ENCODE measurements at regions of chr19 and their contacts with region 1.

Region 1: DNA sequence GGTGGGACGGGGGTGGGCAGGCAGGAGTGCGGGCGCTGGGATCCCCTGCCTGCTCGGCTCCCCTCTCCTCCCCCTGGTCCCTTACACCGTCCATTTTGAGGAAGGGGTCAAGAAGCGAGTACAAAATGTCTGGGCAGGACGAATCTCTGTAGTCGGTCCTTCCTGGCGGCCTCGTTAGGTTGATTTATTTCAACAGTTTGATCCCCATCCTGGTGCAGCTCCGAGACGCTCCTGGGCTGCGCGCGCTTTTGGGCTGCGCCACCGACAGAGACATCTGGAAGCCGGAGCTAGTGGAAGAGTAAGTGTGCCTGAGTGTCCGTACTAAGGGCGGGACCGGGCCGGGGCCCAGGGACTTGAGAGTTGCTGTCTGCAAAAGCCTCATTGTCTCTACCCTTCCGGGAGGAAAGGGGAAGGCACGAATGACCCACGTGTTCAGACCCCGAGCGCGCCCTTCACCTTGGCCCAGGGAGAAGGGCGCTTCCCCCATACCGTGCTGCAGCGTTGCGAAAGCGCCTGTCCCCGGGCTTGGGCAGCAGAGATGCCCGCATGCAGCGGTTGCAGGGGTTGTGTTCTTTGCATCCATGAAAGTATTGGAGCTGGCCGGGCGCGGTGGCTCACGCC is 1.8 kb downstream of the ZNF114 start:
- DNase-seq: peak; percentile 31
- H3K4me3 ChIP-seq: peak overlapping the region; percentile 58
- H3K27ac ChIP-seq: no peak overlapping the region
- H3K4me1 ChIP-seq: no peaks in the 10 kb centered on the region
- CTCF ChIP-seq: no peak

Region 2: DNA sequence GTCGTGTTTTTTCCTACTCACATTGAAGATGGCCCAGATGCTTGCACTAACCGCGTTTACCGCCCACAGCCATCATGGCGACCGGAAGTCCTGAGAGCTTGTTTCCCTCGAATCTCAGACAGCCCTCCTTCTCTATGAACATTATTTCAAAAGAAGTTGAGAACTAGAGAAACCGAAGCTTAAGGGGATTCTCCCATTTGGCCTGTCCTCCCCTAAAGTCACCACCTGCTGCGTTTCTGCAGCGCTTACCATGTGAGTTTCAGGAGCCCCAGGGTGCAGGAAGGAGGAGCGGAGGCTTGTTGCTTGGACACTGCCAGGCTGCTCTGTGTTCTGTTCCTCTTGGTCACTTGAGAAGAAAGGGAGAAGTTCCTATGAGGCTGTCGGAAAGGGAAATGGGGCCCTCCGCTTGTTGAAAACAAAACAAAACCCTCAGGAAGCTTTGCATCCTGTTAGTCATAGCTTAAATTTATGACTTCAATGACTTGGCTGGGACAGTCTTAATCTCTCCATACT is 22.1 kb before region 1 on chr19:
- CTCF ChIA-PET with region 1: no interaction called
- POLR2A ChIA-PET with region 1: no interaction called
- intact Hi-C with region 1: no loop called
- DNase-seq: peak; percentile 80
- H3K4me3 ChIP-seq: peak overlapping the region; percentile 69
- H3K27ac ChIP-seq: peak overlapping the region; percentile 92
- H3K4me1 ChIP-seq: peaks cover 71% of the 10 kb centered on the region
- CTCF ChIP-seq: no peak

Region 3: DNA sequence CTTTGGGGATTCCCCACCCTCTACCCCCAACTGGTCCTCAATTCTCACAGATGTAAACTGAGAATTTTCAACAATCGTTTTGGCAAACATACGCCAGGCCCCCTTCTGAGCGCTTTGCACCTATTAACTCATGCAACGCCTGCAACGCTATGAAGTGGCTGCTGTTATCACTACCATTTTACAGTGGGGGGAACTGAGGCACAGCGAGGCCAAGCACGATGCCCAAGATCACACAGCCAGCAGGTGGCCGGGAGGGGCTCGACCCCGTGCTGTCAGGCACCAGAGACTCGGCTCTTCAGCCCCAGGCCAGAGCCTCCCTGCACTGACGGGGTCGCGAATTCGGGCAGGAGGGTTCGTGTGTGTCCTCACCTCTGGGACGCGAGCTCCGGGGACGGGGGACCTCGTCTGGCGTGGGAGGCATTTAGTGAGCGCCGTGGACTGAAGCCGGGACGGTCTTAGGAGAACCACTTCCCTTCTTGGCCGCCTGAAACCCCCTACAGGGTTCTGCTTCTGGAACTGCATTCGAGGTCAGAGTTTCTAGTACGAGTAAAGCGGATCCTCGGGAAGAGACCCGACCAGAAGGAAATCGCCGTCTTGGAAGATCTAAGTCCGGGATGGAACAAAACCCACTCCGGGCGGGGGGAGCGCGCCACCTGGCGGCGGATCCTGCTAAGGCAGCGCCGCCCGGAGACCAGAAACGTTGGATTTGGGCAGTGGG is 19.3 kb after region 1 on chr19:
- CTCF ChIA-PET with region 1: no interaction called
- POLR2A ChIA-PET with region 1: interaction called, 3 read pairs
- intact Hi-C with region 1: loop called (anchors 1 kb)
- DNase-seq: peak; percentile 52
- H3K4me3 ChIP-seq: peak overlapping the region; percentile 52
- H3K27ac ChIP-seq: no peak overlapping the region
- H3K4me1 ChIP-seq: no peaks in the 10 kb centered on the region
- CTCF ChIP-seq: peak; percentile 97; the same call in 1 of the 2 replicates

Region 4: GRCh38 chr19:48308631-48309586 is 37.3 kb after region 1 on chr19:
- CTCF ChIA-PET with region 1: no interaction called
- POLR2A ChIA-PET with region 1: no interaction called
- intact Hi-C with region 1: loop called (anchors 2 kb)
- DNase-seq: peak; percentile 33
- H3K4me3 ChIP-seq: no peak overlapping the region
- H3K27ac ChIP-seq: no peak overlapping the region
- H3K4me1 ChIP-seq: peaks cover 12% of the 10 kb centered on the region
- CTCF ChIP-seq: peak; percentile 63

Region 5: GRCh38 chr19:48588670-48589399 is 317.2 kb after region 1 on chr19:
- CTCF ChIA-PET with region 1: no interaction called
- POLR2A ChIA-PET with region 1: no interaction called
- intact Hi-C with region 1: loop called (anchors 2 kb)
- DNase-seq: peak; percentile 87
- H3K4me3 ChIP-seq: peak overlapping the region; percentile 48
- H3K27ac ChIP-seq: no peak overlapping the region
- H3K4me1 ChIP-seq: peaks cover 4% of the 10 kb centered on the region
- CTCF ChIP-seq: peak; percentile 94